Activated CD4-positive, alpha-beta T cell treated with anti-CD3 and anti-CD28 coated beads, Interleukin-2, amount 10 ng/mL, durations not matched to agents 24 days and 14 days (primary cell): ENCODE measurements at regions of chr17 and their contacts with region 1.

Region 1: GRCh38 chr17:8118769-8119580 is 661 bp upstream of the ALOXE3 start:
- DNase-seq: peak; percentile 95
- H3K4me3 Mint-ChIP-seq: peak overlapping the region; percentile 91
- H3K27ac Mint-ChIP-seq: peak overlapping the region; percentile 92
- H3K4me1 Mint-ChIP-seq: peaks cover 51% of the 10 kb centered on the region
- H3K27me3 Mint-ChIP-seq: peaks cover 61% of the 10 kb centered on the region

Region 2: GRCh38 chr17:7915611-7916382 is 203.2 kb before region 1 on chr17 and contains the start of gene RNF227:
- intact Hi-C with region 1: loop called (anchors 10 kb)
- DNase-seq: peak; percentile 94
- H3K4me3 Mint-ChIP-seq: peak within 1 kb of the TSS; percentile 97
- H3K27ac Mint-ChIP-seq: peak within 1 kb of the TSS; percentile 97
- H3K4me1 Mint-ChIP-seq: peaks cover 26% of the 10 kb centered on the region
- H3K27me3 Mint-ChIP-seq: no peaks in the 10 kb centered on the region
- total RNA-seq, gene RNF227: 6.2 and 6.5 TPM in 2 replicates

Region 3: DNA sequence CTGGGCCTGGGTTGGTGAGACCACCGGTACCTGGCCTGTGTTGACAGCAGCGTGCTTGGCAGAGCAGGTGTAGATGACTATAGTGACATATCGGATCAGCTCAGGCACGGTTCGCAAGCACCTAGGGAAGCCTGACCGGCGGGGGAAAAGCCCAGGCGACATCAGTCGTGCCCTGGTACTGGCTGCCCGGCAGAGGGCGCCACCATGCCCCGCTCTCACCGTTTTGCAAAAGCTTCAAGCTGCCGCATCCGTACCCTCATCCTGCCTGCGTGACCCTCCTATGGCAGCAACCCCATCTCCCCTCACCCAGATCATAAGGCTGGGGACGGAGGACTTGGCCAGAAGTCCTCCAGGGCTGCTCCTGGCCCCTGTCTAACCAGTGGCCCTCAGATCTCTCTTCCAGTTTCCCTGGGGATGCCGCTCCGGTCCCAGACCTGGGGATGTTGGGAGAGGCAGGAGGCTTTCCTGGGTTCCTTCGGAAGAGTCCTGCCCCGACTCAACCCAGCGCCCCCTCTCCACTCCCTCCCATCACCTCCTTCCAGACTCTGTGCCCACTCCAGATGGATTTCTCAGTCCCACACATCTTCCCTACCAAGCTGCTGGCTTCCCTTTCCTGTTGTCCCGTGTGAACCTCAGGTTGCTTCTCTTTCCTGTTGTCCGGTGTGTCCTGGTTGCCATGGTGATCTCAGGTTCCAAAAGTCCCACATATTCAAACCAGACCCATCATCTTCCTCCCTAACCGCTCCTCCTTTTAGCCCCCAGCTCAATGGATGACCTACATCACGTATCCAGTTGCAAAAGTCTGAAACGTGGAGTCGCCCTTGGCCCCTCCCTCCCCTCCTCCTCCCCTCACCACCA is 45.1 kb before region 1 on chr17:
- intact Hi-C with region 1: loop called (anchors 2 kb)
- DNase-seq: peak; percentile 95
- H3K4me3 Mint-ChIP-seq: peak overlapping the region; percentile 73
- H3K27ac Mint-ChIP-seq: no peak overlapping the region
- H3K4me1 Mint-ChIP-seq: peaks cover 18% of the 10 kb centered on the region
- H3K27me3 Mint-ChIP-seq: peaks cover 58% of the 10 kb centered on the region

Region 4: DNA sequence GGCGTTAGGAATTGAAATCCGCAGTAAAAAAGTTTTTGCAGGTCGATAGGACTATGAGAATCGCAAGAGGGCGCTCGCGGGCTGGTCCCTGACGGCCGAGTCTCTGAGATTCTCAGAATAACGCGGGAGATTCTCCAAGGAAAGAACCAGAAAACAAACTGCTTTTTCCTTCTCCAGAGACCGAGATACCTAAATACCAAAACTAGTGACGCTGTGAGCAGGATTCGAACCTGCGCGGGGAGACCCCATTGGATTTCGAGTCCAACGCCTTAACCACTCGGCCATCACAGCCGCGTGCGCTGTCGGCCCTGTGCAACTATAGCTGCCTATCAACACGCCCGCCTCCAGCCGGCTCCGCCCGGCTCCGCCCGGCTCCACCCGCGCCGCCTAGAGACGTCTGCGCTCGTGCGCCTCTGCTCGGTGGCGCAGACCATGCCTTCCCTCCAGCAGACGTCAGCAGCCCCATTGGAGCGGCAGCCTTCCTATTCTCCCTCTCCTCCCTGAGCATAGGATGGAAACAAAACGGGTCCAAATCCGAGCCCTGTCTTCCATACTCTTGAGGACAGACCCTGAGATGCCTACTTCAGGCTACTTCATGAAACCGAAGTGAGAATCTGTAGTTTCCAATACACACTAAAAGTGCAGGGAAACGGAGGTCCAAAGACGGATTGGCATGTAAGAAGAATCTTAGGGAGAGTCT is 19.8 kb after region 1 on chr17:
- intact Hi-C with region 1: loop called (anchors 1 kb)
- DNase-seq: peak; percentile 99
- H3K4me3 Mint-ChIP-seq: no peak overlapping the region
- H3K27ac Mint-ChIP-seq: no peak overlapping the region
- H3K4me1 Mint-ChIP-seq: peaks cover 4% of the 10 kb centered on the region
- H3K27me3 Mint-ChIP-seq: peaks cover 5% of the 10 kb centered on the region

Region 5: DNA sequence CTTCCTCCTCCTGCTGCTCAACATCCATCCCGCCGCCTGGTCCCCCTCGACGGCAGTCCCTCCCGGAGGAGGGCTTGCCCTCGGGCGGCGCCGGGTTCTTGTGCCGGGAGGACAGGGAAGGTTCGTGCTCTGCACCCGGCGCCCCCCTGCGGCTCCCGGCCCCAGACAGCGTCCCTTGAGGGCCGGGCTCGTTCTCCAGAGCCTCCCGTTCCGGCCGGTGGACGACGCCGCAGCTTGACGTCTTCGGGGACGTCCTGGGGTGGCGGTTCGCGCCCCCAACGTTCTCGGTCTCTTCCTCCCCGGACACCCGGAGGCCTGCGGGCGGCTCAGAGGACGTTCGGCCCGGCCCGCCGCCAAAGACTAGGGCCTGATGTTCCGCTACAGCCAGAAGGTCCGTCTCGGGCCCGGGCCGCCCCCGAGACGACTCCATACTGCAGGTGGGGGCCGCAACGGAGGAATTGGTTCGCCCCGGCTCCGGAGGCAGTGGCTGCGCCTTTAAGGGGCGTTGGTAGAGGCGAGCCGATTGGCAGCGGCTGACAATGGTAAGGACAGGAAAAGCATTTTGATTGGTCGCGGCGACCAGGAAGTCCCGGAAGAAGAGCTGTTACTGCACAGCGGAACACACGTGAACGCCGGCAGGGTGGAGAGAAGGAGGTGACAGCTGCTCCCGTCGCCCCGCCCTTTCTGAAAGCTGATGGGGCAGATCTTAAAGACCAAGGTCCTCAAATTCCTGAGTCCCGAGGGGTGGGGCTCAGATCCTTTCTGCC is 70.9 kb after region 1 on chr17 and contains the start of gene BORCS6:
- intact Hi-C with region 1: loop called (anchors 1 kb)
- DNase-seq: peak; percentile 98
- H3K4me3 Mint-ChIP-seq: no peak within 1 kb of the TSS
- H3K27ac Mint-ChIP-seq: peak within 1 kb of the TSS; percentile 92
- H3K4me1 Mint-ChIP-seq: peaks cover 12% of the 10 kb centered on the region
- H3K27me3 Mint-ChIP-seq: no peaks in the 10 kb centered on the region
- total RNA-seq, gene BORCS6: 4.7 and 5.7 TPM in 2 replicates

Region 6: GRCh38 chr17:8248751-8249607 is 130.0 kb after region 1 on chr17 and contains the start of gene PFAS:
- intact Hi-C with region 1: loop called (anchors 2 kb)
- DNase-seq: peak; percentile 99
- H3K4me3 Mint-ChIP-seq: peak within 1 kb of the TSS; percentile 92
- H3K27ac Mint-ChIP-seq: peak within 1 kb of the TSS; percentile 99
- H3K4me1 Mint-ChIP-seq: peaks cover 36% of the 10 kb centered on the region
- H3K27me3 Mint-ChIP-seq: no peaks in the 10 kb centered on the region
- total RNA-seq, gene PFAS: 208 and 211 TPM in 2 replicates

Region 7: GRCh38 chr17:8383143-8383822 is 264.3 kb after region 1 on chr17 and contains the start of gene RPL26:
- intact Hi-C with region 1: loop called (anchors 10 kb)
- DNase-seq: peak; percentile 98
- H3K4me3 Mint-ChIP-seq: peak within 1 kb of the TSS; percentile 99
- H3K27ac Mint-ChIP-seq: peak within 1 kb of the TSS; percentile 95
- H3K4me1 Mint-ChIP-seq: peaks cover 40% of the 10 kb centered on the region
- H3K27me3 Mint-ChIP-seq: no peaks in the 10 kb centered on the region
- total RNA-seq, gene RPL26: 2,460 and 2,469 TPM in 2 replicates